Activated B cell treated with CpG ODN at 0.5 μM for 24 hours (primary cell): ENCODE measurements at regions of chr10 and their contacts with region 1.

Region 1: GRCh38 chr10:71396084-71396720 is 518 bp upstream of the CDH23 start:
- DNase-seq: peak; percentile 54
- ATAC-seq: peak; percentile 71
- H3K4me3 Mint-ChIP-seq: peak overlapping the region; percentile 78
- H3K27ac Mint-ChIP-seq: no peak overlapping the region
- H3K4me1 Mint-ChIP-seq: peaks cover 8% of the 10 kb centered on the region
- H3K27me3 Mint-ChIP-seq: peaks cover 52% of the 10 kb centered on the region
- CTCF ChIP-seq: no peak

Region 2: DNA sequence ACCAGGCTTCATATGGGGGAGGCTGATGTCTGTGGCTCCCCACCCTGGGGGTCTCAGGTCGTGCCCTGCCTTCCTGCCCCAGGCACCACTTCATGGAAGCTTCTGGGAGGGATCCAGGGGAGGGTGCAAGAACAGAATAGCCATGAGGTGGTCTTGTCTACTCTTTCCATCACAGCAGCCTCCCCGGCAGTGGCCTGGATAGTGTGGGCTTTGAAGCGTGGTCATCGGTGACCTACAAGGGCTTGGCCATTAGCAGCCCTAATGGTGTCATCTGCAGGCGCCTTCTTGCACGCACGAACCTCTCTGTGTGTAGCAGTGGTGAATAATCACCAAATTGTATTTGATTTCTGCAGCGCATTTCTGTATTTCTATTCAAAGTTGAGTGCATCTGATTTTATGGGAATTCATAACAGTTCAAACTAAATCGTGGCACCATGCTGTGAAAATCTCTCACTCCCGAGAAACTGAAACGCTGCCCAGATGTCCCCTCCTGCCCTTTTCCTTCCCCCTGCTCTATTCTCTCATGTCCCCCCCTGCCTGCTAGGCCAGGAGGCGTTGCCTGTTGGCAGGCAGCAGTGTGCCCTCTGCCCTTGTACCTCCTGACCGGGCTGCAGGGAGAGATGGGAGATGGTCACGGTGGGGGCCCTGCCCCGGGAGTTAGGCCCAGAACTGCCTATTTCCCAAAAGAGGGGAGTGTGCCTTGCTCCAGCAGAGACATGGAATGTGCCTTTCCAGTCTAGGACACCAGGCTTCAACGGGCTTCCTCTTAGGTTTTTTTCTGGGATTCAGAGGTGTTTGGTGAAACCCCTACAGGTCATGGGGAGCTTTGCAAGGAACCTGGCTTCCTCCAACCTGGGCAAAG is 35.3 kb after region 1 on chr10:
- CTCF ChIA-PET with region 1: no interaction called
- POLR2A ChIA-PET with region 1: no interaction called
- intact Hi-C with region 1: no loop called
- DNase-seq: no peak
- ATAC-seq: no peak
- H3K4me3 Mint-ChIP-seq: no peak overlapping the region
- H3K27ac Mint-ChIP-seq: no peak overlapping the region
- H3K4me1 Mint-ChIP-seq: no peaks in the 10 kb centered on the region
- H3K27me3 Mint-ChIP-seq: peaks cover 9% of the 10 kb centered on the region
- CTCF ChIP-seq: no peak

Region 3: DNA sequence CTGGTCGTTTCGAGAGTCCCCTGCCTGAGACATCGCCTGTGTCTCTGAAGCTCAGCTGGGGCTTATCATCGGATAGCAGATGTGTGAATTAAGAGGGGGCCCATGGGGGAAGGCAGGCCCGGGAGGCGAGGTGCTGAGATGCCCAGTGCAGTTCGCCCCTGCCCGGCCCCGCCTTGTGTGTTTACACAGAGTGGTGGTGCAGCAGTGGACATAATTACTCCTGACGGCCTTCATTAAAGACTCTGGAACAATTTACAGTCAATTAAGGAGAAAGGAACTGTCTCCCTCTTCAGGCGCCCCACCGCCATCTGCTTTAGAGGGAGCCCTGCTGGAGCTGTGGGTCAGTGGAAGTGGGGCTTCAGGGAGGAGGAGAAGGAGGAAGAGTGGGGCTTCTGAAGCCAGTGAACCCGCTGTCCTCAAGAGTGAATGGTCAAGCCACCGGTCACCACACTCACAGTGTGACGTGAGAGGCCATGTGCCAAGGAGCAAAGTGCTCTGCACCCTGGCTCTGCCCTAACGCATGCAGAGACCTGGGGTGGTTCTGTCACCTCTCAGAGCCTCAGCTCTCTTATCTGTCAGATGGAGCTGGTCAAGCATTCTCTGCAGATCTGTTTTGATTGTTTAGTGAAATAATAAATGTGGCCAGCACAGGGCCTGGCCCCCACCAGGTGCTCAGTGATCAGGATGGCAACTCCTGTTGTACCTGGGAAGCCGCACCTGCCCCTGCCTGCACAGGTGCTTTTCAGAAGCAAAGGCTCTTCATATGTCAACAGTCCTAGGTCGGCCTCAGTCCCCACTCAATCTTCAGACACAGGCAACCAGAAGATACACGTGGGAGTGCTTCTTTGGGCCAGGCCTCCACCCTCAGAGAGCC is 66.1 kb after region 1 on chr10:
- CTCF ChIA-PET with region 1: no interaction called
- POLR2A ChIA-PET with region 1: no interaction called
- intact Hi-C with region 1: no loop called
- DNase-seq: no peak
- ATAC-seq: no peak
- H3K4me3 Mint-ChIP-seq: no peak overlapping the region
- H3K27ac Mint-ChIP-seq: no peak overlapping the region
- H3K4me1 Mint-ChIP-seq: no peaks in the 10 kb centered on the region
- H3K27me3 Mint-ChIP-seq: peaks cover 10% of the 10 kb centered on the region
- CTCF ChIP-seq: no peak

Region 4: GRCh38 chr10:71494980-71495381 is 98.8 kb after region 1 on chr10:
- CTCF ChIA-PET with region 1: no interaction called
- POLR2A ChIA-PET with region 1: no interaction called
- intact Hi-C with region 1: loop called (anchors 5 kb)
- DNase-seq: no peak
- ATAC-seq: peak; percentile 95
- H3K4me3 Mint-ChIP-seq: peak overlapping the region; percentile 6
- H3K27ac Mint-ChIP-seq: peak overlapping the region; percentile 66
- H3K4me1 Mint-ChIP-seq: peaks cover 28% of the 10 kb centered on the region
- H3K27me3 Mint-ChIP-seq: peaks cover 3% of the 10 kb centered on the region
- CTCF ChIP-seq: no peak

Region 5: GRCh38 chr10:71531485-71532446 is 135.6 kb after region 1 on chr10:
- CTCF ChIA-PET with region 1: no interaction called
- POLR2A ChIA-PET with region 1: no interaction called
- intact Hi-C with region 1: no loop called
- DNase-seq: no peak
- ATAC-seq: no peak
- H3K4me3 Mint-ChIP-seq: no peak overlapping the region
- H3K27ac Mint-ChIP-seq: no peak overlapping the region
- H3K4me1 Mint-ChIP-seq: no peaks in the 10 kb centered on the region
- H3K27me3 Mint-ChIP-seq: no peaks in the 10 kb centered on the region
- CTCF ChIP-seq: no peak